Body of pancreas (tissue), 4 donors: ENCODE measurements at regions of chr11 and their contacts with region 1.

Region 1: DNA sequence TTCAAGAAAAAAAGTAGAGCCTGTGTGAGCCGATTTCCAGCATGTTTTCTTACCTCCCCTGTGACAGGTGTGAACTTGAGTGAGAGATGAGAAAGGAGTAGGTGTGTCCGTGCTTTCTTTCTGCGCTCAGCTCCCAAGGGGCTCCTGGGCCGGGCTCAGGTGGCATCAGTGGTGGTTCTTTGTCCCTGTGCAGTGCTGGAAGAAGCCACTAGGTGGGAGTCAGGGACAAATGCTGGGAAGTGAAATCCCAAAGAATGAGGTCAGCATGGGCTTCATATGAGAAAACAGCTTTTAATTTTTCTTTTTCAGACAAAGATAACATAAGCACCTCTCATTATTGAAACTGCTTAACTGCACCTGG is 57.8 kb downstream of the PPFIBP2 start:
- DNase-seq: peak; percentile 81 to 87 (median 84)
- ATAC-seq: peak; percentile 94
- H3K4me3 ChIP-seq: no peak overlapping the region
- H3K27ac ChIP-seq: peak overlapping the region; percentile 39 to 70 (median 40)
- H3K4me1 ChIP-seq: peaks cover 33% of the 10 kb centered on the region
- H3K27me3 ChIP-seq: no peaks in the 10 kb centered on the region
- CTCF ChIP-seq: peak; percentile 89 to 98 (median 96)
- POLR2A ChIP-seq: no peak

Region 2: GRCh38 chr11:7467652-7468051 is 104.0 kb before region 1 on chr11:
- intact Hi-C with region 1: no loop called
- DNase-seq: no peak
- ATAC-seq: no peak
- H3K4me3 ChIP-seq: no peak overlapping the region
- H3K27ac ChIP-seq: no peak overlapping the region
- H3K4me1 ChIP-seq: no peaks in the 10 kb centered on the region
- H3K27me3 ChIP-seq: no peaks in the 10 kb centered on the region
- CTCF ChIP-seq: no peak
- POLR2A ChIP-seq: no peak

Region 3: DNA sequence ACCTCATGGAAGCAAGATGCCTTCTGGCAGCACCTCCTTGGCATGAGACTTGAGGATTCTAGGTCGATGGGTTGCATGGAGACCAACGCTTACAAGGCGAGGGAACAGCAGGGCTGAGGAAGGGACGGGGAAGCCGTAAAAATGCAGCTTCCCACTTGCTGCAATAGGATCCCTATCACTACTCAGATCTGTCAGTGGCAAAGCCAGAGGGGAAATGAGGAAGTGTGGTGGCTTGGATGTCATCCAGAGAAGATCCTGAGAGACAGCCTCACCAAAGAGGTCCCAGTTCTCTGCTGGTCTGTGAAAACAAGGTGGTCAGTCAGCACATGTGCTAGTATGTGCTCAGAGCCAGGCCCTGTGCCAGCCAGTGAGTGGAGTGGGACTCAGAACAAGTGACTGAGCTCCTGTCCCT is 79.5 kb after region 1 on chr11:
- intact Hi-C with region 1: loop called (anchors 5 kb)
- DNase-seq: peak in 1 of 4 donors; percentile 31
- ATAC-seq: no peak
- H3K4me3 ChIP-seq: no peak overlapping the region
- H3K27ac ChIP-seq: no peak overlapping the region
- H3K4me1 ChIP-seq: peaks cover 6% of the 10 kb centered on the region
- H3K27me3 ChIP-seq: no peaks in the 10 kb centered on the region
- CTCF ChIP-seq: no peak
- POLR2A ChIP-seq: no peak

Region 4: DNA sequence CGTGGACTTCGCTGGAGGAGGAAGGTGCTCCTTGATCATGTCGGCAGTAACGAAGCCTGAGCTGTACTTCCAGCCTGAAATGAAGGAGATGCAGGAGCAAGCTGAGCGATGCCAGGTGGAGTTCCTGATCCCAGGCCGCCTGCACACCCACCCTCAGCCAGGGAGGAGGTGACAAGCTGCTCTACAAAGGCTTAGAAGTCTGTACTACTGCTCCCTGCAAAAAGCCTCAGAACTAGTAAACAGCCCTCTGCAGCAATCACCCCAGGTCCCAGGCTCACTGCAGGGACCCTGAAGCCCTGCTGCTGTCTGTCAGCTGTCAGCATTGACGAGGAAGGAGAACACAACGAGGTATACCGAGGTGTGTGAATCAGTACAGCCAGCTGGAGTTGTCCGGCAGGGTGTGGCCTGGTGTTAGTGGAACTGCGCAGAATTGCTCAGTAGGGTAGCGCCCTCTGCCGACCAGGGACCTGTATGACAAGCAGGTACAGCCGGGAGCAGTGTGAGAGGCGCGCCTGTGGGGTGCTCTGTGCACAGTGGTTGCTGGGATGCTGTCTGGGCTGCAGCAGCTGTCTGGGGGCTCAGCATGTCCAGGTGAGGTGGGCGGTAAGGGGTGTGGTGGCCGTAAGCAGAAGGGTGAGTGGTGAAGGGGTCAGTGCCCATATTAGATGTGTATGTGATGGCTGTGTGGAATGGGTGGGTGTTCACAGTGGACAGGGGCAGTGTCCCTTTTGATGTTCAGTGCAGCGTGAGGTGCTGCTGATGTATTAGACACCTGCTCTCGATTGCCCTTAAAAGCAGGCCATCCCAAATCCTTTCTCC is 94.1 kb after region 1 on chr11:
- intact Hi-C with region 1: loop called (anchors 5 kb)
- DNase-seq: peak; percentile 88 to 91 (median 90)
- ATAC-seq: peak; percentile 99
- H3K4me3 ChIP-seq: no peak overlapping the region
- H3K27ac ChIP-seq: peak overlapping the region in 1 of 4 donors; percentile 16
- H3K4me1 ChIP-seq: peaks cover 5% of the 10 kb centered on the region
- H3K27me3 ChIP-seq: no peaks in the 10 kb centered on the region
- CTCF ChIP-seq: peak; percentile 78 to 96 (median 92)
- POLR2A ChIP-seq: no peak